ENCODE measurements at regions of chr2 and their contacts with region 1.

Region 1: DNA sequence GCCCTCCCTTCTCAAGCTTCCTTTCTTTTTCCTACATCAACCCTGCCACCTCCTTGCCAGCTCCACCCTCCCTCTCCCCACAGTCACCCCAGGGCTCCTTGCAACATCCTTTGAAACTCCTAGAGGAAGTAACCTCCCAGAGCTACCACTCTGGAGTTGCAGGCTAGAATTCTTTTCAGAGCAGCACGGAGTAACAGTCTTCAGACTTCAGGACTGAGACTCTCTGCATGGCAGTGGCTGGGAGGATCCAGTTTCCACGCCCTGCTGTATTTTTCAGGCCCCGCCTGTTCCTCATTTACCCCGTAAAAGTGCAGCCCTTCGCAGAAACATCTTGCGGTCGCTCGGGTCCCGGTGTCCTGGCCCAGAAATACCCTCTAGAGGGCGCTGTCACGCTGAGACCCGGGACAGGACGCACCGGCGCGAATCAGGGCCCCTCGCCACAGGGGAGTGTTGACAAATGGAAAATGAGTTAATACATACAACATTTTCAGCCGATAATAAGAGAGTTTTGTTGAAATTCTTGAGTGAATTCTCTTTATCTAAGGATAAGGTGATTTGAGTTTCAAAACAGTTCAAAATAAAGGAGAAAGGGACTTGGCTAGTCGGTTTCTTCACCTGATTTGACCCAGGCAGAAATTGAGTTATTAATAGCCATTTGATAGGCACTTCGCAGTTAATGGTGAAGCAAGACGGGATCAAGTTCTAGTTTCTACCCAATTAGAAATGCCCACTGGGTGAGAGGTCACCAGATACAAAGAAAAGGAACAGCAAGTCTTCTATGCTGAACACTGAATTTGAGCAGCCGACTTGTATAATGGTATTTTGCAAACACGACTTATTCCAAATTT is 18.5 kb upstream of the NTSR2 start:
- DNase-seq: peak; percentile 82
- H3K4me3 ChIP-seq: no peak overlapping the region
- H3K27ac ChIP-seq: no peak overlapping the region
- H3K4me1 ChIP-seq: peaks cover 10% of the 10 kb centered on the region
- CTCF ChIP-seq: peak; percentile 98

Region 2: GRCh38 chr2:11663427-11663826 is 25.0 kb before region 1 on chr2:
- CTCF ChIA-PET with region 1: no interaction called
- POLR2A ChIA-PET with region 1: no interaction called
- intact Hi-C with region 1: no loop called
- DNase-seq: no peak
- H3K4me3 ChIP-seq: no peak overlapping the region
- H3K27ac ChIP-seq: no peak overlapping the region
- H3K4me1 ChIP-seq: no peaks in the 10 kb centered on the region
- CTCF ChIP-seq: no peak

Region 3: GRCh38 chr2:11778923-11779757 is 90.7 kb after region 1 on chr2:
- CTCF ChIA-PET with region 1: interaction called, 6 read pairs
- POLR2A ChIA-PET with region 1: no interaction called
- intact Hi-C with region 1: loop called (anchors 1 kb)
- DNase-seq: peak; percentile 81
- H3K4me3 ChIP-seq: no peak overlapping the region
- H3K27ac ChIP-seq: no peak overlapping the region
- H3K4me1 ChIP-seq: peaks cover 15% of the 10 kb centered on the region
- CTCF ChIP-seq: peak; percentile 97

Region 4: DNA sequence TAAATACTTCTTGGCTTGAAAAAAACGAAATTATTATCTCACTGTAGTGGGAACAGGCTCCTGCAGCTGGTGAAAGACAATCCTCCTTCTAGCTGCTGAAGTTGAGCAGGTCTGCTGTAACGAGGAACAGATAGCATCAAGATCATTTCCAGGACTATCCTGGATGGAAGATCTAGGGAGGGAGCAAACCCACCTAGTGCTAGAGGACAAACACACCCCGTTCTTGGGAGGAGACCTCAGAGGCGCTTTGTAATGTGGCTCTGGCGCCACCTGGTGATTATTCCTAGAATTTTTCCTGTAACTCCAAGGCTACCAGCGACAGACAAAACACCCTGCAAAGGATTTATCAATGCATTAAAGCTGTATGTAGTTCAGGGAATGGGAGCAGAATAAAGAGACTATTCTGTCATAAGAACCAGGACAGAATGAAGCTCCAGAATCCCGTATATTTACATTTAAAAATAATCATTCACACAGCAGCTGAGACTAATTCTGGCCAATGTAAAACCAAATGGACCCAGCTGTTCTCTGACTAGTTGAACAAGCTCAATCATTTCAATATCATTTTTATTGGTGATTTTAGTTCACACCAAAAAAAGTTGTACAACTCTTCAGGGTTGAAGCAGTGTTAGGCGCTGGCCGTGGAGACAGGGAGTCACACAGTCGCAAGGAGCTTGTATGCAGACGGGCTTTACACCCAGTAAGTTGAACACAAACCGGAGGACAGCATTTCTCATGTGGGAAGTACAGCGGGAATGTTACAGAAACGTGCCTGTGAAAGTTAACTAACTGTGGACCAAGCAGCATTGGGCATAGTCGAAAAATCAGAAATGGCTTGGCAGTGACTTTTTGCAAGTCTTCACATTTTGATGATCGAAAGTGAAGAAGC is 1318.6 kb after region 1 on chr2:
- CTCF ChIA-PET with region 1: no interaction called
- POLR2A ChIA-PET with region 1: no interaction called
- intact Hi-C with region 1: loop called (anchors 10 kb)
- DNase-seq: peak; percentile 61
- H3K4me3 ChIP-seq: no peak overlapping the region
- H3K27ac ChIP-seq: no peak overlapping the region
- H3K4me1 ChIP-seq: no peaks in the 10 kb centered on the region
- CTCF ChIP-seq: peak; percentile 90